Colonic mucosa (tissue), 4 donors: ENCODE measurements at regions of chr19 and their contacts with region 1.

Region 1: DNA sequence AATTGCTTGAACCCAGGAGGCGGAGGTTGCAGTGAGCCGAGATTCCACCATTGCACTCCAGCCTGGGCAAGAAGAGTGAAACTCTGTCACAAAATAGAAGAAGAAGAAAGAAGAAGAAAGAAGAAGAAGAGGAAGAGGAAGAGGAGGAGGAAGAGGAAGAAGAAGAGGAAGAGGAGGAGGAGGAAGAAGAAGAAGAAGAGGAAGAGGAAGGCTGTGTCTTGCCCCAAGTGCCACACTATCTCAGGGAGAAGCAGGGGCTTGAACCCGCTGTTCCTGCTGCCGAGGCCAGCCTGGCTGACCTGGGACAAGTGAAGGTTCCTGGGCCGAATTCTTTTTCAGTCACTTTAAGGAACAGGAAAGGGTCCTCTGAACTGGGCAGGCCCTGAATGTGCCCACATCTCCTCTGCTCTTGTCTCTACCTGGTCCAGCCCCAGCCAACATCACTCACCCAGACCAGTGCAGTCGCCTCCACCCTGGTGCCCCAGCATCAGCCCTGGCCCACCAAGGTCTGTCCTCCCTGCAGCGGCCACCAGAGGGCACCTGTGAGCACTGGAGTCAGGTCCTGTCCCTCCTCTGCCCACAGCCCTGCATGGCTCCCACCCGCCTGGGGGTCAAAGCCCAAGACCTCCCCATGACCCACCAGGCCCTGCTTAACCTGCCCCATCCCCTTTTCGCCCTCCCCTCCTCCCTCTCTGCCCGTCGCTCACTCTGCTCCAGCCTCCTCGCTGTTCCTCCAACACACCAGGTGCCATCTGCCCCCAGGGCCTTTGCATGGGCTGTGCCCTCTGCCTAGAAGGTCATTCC is 20.0 kb downstream of the TICAM1 start:
- DNase-seq: peak; percentile 89
- H3K4me3 ChIP-seq: no peak overlapping the region
- H3K27ac ChIP-seq: no peak overlapping the region
- H3K4me1 ChIP-seq: peaks cover 4% of the 10 kb centered on the region
- H3K27me3 ChIP-seq: no peaks in the 10 kb centered on the region
- CTCF ChIP-seq: peak; percentile 94

Region 2: GRCh38 chr19:4851551-4852290 is 40.2 kb after region 1 on chr19:
- intact Hi-C with region 1: loop called (anchors 2 kb)
- DNase-seq: peak; percentile 72
- H3K4me3 ChIP-seq: no peak overlapping the region
- H3K27ac ChIP-seq: no peak overlapping the region
- H3K4me1 ChIP-seq: no peaks in the 10 kb centered on the region
- H3K27me3 ChIP-seq: no peaks in the 10 kb centered on the region
- CTCF ChIP-seq: peak; percentile 73

Region 3: DNA sequence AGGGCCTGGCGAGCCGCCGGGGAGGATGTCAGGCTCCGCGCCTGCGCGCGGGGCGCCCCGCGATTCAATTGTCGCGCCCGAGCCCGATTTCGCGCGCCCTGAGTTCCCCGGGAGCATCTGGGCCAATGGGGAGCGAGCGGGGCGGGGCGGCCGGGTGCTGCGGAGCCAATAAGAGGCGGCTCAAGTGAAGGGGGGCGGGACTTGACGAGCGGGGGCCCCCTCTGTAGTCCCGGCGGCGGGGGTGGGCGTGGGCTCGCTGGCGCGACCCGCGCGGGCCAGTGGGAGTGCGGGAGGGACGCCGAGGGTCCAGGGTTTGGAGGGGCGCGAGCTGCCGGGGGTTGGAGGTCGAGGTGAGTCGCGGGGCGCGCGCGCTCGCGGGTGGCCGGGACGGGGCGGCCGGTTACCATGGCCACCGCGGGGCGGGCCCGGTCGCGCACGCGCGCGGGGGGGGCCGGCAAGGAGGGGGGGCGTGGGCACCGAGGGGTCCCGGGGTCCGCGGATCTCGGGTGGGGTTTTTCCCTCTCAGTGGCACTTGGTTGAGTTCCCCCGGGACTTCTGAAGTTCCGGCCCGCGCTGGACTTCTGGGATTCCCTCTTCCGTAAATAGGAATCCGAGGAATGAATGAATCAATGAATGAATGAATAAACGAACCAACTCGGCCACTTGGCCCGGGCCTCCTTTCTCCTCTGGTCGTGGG is 98.5 kb after region 1 on chr19:
- intact Hi-C with region 1: loop called (anchors 2 kb)
- DNase-seq: peak; percentile 93
- H3K4me3 ChIP-seq: peak overlapping the region; percentile 80
- H3K27ac ChIP-seq: no peak overlapping the region
- H3K4me1 ChIP-seq: peaks cover 12% of the 10 kb centered on the region
- H3K27me3 ChIP-seq: no peaks in the 10 kb centered on the region
- CTCF ChIP-seq: no peak

Region 4: GRCh38 chr19:5031231-5032100 is 219.9 kb after region 1 on chr19:
- intact Hi-C with region 1: loop called (anchors 5 kb)
- DNase-seq: peak; percentile 87
- H3K4me3 ChIP-seq: no peak overlapping the region
- H3K27ac ChIP-seq: no peak overlapping the region
- H3K4me1 ChIP-seq: no peaks in the 10 kb centered on the region
- H3K27me3 ChIP-seq: no peaks in the 10 kb centered on the region
- CTCF ChIP-seq: peak; percentile 96